ENCODE measurements at regions of chr7 and their contacts with region 1.

Region 1: GRCh38 chr7:35801392-35802101 is 690 bp downstream of the SEPTIN7 start:
- DNase-seq: peak; percentile 83
- ATAC-seq: peak; percentile 32
- H3K4me3 Mint-ChIP-seq: peak overlapping the region; percentile 94
- H3K27ac Mint-ChIP-seq: peak overlapping the region; percentile 90
- H3K4me1 Mint-ChIP-seq: peaks cover 33% of the 10 kb centered on the region
- H3K27me3 Mint-ChIP-seq: no peaks in the 10 kb centered on the region

Region 2: GRCh38 chr7:35694781-35695472 is 106.6 kb before region 1 on chr7 and contains the start of gene HERPUD2:
- POLR2A ChIA-PET with region 1: interaction called, 76 read pairs
- DNase-seq: peak; percentile 93
- ATAC-seq: peak; percentile 81
- H3K4me3 Mint-ChIP-seq: peak within 1 kb of the TSS; percentile 95
- H3K27ac Mint-ChIP-seq: peak within 1 kb of the TSS; percentile 97
- H3K4me1 Mint-ChIP-seq: peaks cover 39% of the 10 kb centered on the region
- H3K27me3 Mint-ChIP-seq: no peaks in the 10 kb centered on the region
- total RNA-seq, gene HERPUD2: 48.5 to 55.6 TPM

Region 3: DNA sequence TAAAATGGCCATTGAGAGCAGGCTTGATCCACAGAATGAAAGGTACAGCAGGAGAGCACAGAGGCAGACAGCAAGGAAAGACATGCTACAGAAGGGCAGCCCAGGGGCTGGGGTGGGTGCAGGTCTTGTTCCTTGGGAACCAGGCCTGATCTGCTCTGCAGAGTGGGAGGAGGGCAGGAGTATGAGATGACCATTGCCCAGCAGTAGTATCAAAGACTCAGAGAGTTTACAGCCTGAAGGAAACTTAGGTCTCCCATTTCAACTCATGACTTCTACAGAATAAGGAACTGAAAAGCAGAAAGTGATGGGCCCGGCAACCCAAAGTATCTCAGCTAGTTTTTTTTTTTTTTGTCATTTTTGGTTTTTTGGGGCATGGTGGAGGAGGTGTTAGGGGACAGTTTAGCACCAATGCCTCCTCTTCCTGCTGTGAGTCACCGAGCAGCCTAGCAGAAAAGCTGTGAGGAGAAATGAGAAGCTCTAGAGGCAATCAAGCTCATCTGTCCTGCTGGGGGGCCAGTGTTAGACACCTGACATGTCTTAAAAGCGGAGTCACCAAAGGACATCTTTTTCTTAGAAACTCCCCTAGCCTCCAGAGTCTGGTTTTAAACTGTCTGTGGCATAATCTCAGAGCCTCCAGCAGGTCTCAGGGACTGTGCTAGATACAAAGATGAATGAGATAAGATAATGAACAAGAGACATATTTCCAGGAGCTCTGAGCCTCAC is 72.3 kb before region 1 on chr7:
- POLR2A ChIA-PET with region 1: interaction called, 75 read pairs
- DNase-seq: no peak
- ATAC-seq: peak; percentile 62
- H3K4me3 Mint-ChIP-seq: peak overlapping the region; percentile 26
- H3K27ac Mint-ChIP-seq: peak overlapping the region; percentile 70
- H3K4me1 Mint-ChIP-seq: peaks cover 49% of the 10 kb centered on the region
- H3K27me3 Mint-ChIP-seq: peaks cover 4% of the 10 kb centered on the region

Region 4: DNA sequence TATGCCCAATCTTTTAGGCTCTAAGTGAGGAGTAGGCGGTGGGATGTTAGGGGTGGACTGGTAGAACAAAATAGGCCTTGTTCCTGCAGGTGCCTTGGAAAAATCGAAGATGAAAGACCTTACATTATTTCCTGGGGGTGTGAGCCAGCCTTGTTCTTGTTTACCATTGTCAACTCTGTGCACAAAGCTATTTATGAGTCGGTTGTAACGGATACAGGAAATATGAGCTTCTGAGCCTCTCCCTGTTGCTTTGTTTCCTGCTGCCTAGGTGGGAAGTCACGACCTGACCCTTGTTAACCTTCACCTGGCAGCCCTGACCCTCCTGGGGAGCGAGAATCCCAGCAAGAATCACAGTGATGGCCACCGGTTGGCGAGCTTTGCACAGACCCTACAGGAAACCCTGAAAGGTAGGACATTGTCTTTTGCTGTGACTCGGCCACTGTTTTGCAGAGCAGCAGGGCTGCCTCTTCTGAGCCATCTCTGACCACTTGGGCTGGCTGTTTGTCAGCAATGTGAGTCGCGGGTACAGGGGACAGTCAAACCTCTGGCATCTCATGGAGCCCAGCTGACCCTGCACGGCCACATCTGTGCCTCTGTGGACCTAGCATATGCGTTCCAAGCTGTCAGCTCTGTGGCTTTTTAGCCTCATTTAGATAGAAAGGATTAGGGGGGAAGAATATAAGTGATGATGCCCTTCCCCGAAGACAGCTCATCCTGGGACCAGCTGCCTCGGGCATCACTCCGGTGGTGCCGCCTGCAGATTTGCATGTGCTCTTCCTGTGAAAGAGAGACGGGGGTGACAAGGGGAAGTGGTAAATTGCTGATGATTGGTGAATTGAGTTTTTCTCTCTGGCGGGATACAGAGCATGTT is 486.1 kb after region 1 on chr7:
- POLR2A ChIA-PET with region 1: interaction called, 14 read pairs
- DNase-seq: peak; percentile 54
- ATAC-seq: peak; percentile 34
- H3K4me3 Mint-ChIP-seq: peak overlapping the region; percentile 75
- H3K27ac Mint-ChIP-seq: peak overlapping the region; percentile 95
- H3K4me1 Mint-ChIP-seq: peaks cover 49% of the 10 kb centered on the region
- H3K27me3 Mint-ChIP-seq: no peaks in the 10 kb centered on the region

Measured in activated naive CD8-positive, alpha-beta T cell treated with anti-CD3 and anti-CD28 coated beads, Interleukin-2, amount 10 ng/mL, durations not matched to agents 7 days and 5 days (primary cell).